Heart left ventricle (tissue), 16 donors: ENCODE measurements at regions of chr9 and their contacts with region 1.

Region 1: DNA sequence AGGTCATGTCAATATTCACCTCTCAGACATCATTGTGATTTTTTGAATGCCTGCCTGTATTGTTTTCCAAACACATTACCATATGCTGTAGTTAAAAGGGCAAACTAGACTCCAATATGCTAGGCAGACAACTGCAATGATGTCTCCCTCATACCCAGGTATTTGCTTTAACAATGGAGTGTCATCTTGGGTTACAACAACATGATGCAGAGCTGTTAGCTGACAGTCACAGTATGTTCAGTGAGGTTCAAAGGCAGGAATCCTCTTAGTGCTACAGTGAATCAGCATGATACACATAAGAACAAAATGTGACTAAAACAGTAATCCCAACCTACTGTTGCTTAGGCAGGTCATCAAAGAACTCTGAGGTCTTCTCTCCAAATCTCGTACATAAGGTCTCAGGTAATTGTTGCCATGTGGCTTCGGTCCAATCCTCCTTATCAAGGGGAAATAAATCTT is 24.0 kb downstream of the OR1J1 start:
- DNase-seq: no peak
- ATAC-seq: no peak
- H3K4me3 ChIP-seq: no peak overlapping the region
- H3K27ac ChIP-seq: no peak overlapping the region
- H3K4me1 ChIP-seq: no peaks in the 10 kb centered on the region
- H3K27me3 ChIP-seq: peaks cover 0 to 10% (median 0%) of the 10 kb centered on the region in 9 donors
- CTCF ChIP-seq: no peak
- POLR2A ChIP-seq: no peak

Region 2: GRCh38 chr9:122099271-122099869 is 354.3 kb before region 1 on chr9:
- intact Hi-C with region 1: loop called in 9 of 10 experiments (anchors 2 to 10 kb)
- DNase-seq: peak; percentile 75 to 89 (median 79)
- ATAC-seq: peak in 3 of 4 donors; percentile 78 to 89 (median 88)
- H3K4me3 ChIP-seq: peak overlapping the region in 1 of 12 donors; percentile 27
- H3K27ac ChIP-seq: no peak overlapping the region
- H3K4me1 ChIP-seq: peaks cover 0 to 8% (median 0%) of the 10 kb centered on the region in 12 donors
- H3K27me3 ChIP-seq: no peaks in the 10 kb centered on the region
- CTCF ChIP-seq: peak; percentile 79 to 94 (median 88)
- POLR2A ChIP-seq: no peak

Region 3: GRCh38 chr9:122370869-122371755 is 82.6 kb before region 1 on chr9 and contains the start of gene PTGS1:
- intact Hi-C with region 1: loop called in 2 of 10 experiments (anchors 10 kb)
- DNase-seq: peak; percentile 54 to 77 (median 61)
- ATAC-seq: peak in 3 of 4 donors; percentile 65 to 70 (median 65)
- H3K4me3 ChIP-seq: peak within 1 kb of the TSS in 11 of 12 donors; percentile 27 to 69 (median 48)
- H3K27ac ChIP-seq: peak within 1 kb of the TSS in 4 of 12 donors; percentile 17 to 87 (median 60)
- H3K4me1 ChIP-seq: peaks cover 0 to 41% (median 17%) of the 10 kb centered on the region in 12 donors
- H3K27me3 ChIP-seq: peaks cover 0 to 9% (median 0%) of the 10 kb centered on the region in 9 donors
- CTCF ChIP-seq: no peak
- POLR2A ChIP-seq: no peak
- total RNA-seq, gene PTGS1: 2.0 to 24.7 (median 6.3) TPM